IMR-90 (cell line): ENCODE measurements at regions of chr12 and their contacts with region 1.

Region 1: DNA sequence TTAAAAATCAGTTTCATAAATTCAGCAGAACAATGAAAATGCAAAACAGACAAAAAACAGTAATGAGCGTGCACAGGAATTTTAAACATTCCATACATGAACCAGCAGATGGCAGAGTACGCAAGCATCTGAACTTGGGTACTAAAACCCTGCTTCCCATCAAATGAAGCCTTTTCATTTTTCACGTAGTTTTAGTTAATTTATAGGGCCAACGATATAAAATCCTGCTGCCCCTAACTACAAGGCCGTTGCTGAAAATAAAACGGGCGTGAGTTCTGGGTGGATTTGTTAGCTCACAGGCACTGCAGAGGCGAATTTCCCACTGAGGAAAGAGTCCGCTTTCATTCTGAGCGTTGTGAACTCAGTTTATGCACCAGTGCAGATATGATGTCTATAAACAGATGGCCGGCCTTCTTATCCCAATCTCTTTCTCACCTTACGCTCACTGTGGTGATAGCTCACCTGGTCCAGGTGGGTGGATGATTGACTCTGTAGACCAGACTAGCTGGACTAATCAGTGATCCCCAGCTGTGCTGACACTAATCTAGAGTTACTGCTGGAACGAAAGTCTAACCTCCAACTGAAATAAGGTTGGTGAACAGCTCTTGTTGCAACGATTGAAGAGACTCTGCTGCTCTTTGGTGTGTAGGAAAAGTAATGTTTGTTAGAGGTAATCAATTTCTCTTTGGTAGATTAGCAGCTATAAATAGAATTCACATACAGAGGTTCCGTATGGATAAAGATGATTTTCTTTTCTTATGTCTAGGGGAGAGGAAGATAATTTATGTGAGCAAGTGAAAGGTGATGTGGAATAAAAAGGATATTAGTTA is 89.2 kb downstream of the PDZRN4 start:
- DNase-seq: peak; percentile 52
- ATAC-seq: peak; percentile 62
- H3K4me3 ChIP-seq: no peak overlapping the region
- H3K27ac ChIP-seq: no peak overlapping the region
- H3K4me1 ChIP-seq: no peaks in the 10 kb centered on the region
- H3K27me3 ChIP-seq: no peaks in the 10 kb centered on the region
- CTCF ChIP-seq: peak; percentile 73
- POLR2A ChIP-seq: no peak
- RAD21 ChIP-seq: peak; percentile 77

Region 2: DNA sequence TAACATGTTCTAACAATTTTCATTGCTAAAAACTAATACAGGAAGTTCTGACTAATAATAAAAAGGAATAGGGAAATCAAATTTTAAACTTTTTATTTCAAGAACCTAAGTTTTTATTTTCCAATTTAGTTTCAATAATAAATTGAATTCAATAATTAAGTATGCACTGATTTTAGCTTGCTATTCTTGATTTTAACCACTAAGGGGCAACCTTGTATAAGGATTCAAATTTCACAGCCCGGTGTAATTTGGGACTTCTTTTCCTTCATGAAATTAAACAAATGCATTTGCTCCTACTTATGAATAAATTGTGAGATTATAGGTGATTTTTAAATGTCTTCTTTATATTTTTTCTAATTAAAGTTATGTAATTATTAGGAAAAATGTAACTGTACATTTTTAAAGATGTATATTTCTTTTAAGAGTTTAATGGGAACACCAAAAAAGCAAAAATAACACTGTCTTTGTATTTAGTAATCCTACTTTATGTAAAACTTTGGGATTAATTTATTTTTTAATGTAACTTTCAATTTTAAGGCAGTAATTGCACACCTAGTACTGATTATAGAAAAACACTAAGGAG is 330.6 kb before region 1 on chr12:
- CTCF ChIA-PET with region 1: no interaction called
- POLR2A ChIA-PET with region 1: no interaction called
- dilution Hi-C with region 1: no loop called
- in situ Hi-C with region 1: loop called (anchors 10 kb)
- intact Hi-C with region 1: loop called (anchors 2 kb)
- DNase-seq: peak; percentile 42
- ATAC-seq: peak; percentile 57; the same call in 1 of the 2 replicates
- H3K4me3 ChIP-seq: no peak overlapping the region
- H3K27ac ChIP-seq: no peak overlapping the region
- H3K4me1 ChIP-seq: no peaks in the 10 kb centered on the region
- H3K27me3 ChIP-seq: no peaks in the 10 kb centered on the region
- CTCF ChIP-seq: peak; percentile 69
- POLR2A ChIP-seq: no peak
- RAD21 ChIP-seq: peak; percentile 73

Region 3: DNA sequence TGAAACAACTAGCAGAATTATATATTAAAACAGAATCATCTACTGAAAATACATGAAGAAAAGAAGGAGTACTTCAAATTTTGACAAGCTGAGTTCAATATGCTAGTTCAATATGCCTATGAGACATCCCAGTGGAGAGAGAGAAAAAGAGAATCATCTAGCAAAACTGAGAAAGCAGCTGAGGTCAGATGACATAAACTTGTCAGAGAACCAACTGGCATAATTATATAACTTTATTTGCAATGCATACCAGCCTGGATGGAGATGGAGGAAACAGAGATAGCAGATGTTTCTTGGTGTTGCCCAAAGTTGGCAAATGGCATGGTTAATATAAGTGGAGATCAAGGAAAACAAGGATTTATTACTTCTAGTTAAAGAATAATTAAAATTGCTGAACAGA is 237.9 kb before region 1 on chr12:
- CTCF ChIA-PET with region 1: no interaction called
- POLR2A ChIA-PET with region 1: no interaction called
- dilution Hi-C with region 1: no loop called
- in situ Hi-C with region 1: no loop called
- intact Hi-C with region 1: no loop called
- DNase-seq: no peak
- ATAC-seq: no peak
- H3K4me3 ChIP-seq: no peak overlapping the region
- H3K27ac ChIP-seq: no peak overlapping the region
- H3K4me1 ChIP-seq: no peaks in the 10 kb centered on the region
- H3K27me3 ChIP-seq: no peaks in the 10 kb centered on the region
- CTCF ChIP-seq: no peak
- POLR2A ChIP-seq: no peak
- RAD21 ChIP-seq: no peak

Region 4: GRCh38 chr12:41174602-41175001 is 102.7 kb before region 1 on chr12:
- CTCF ChIA-PET with region 1: no interaction called
- POLR2A ChIA-PET with region 1: no interaction called
- dilution Hi-C with region 1: no loop called
- in situ Hi-C with region 1: no loop called
- intact Hi-C with region 1: no loop called
- DNase-seq: no peak
- ATAC-seq: no peak
- H3K4me3 ChIP-seq: no peak overlapping the region
- H3K27ac ChIP-seq: no peak overlapping the region
- H3K4me1 ChIP-seq: no peaks in the 10 kb centered on the region
- H3K27me3 ChIP-seq: no peaks in the 10 kb centered on the region
- CTCF ChIP-seq: no peak
- POLR2A ChIP-seq: no peak
- RAD21 ChIP-seq: no peak

Region 5: DNA sequence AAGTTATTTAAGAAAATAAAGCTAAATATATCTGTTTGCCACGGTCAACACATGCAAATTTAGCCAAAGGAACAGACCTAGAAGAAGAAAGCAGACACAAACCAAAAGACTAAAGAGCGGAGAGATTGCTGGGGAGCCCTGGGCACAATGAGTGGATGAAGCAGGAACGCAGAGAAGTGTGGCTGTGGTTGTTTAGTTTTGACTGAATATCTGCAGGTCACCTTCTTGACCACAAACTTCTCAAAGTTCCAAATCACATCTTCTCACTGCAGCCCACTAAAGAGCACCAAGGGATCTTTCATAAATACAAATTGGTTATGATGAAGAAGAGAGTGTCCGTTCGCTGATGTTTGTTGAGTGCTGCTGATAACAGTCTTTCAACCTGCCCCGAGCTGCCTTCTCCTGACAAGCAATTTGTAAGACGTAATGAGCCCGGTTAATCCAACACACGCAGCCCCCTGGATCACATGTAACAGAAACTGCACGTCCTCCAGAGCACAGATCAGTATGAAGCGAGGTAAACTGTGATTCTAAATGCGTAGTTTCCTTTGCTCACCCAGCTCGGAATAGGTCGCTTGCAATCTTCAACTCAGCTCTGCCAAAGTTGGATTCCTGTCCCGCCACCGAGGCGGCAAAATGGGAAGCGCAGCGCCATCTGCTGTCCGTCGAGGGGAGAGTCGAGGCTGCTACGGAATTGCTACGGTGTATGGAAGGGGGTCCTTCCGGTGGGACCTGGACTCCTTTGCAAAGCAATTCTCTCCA is 746.6 kb after region 1 on chr12:
- CTCF ChIA-PET with region 1: interaction called, 20 read pairs
- POLR2A ChIA-PET with region 1: no interaction called
- dilution Hi-C with region 1: no loop called
- in situ Hi-C with region 1: loop called (anchors 10 kb)
- intact Hi-C with region 1: loop called (anchors 1 kb)
- DNase-seq: peak; percentile 64
- ATAC-seq: peak; percentile 99
- H3K4me3 ChIP-seq: peak overlapping the region; percentile 49
- H3K27ac ChIP-seq: no peak overlapping the region
- H3K4me1 ChIP-seq: no peaks in the 10 kb centered on the region
- H3K27me3 ChIP-seq: peaks cover 2% of the 10 kb centered on the region; the same call in 1 of the 2 replicates
- CTCF ChIP-seq: peak; percentile 87
- POLR2A ChIP-seq: no peak
- RAD21 ChIP-seq: peak; percentile 76

Region 6: GRCh38 chr12:42332301-42333285 is 1055.3 kb after region 1 on chr12:
- CTCF ChIA-PET with region 1: no interaction called
- POLR2A ChIA-PET with region 1: no interaction called
- dilution Hi-C with region 1: no loop called
- in situ Hi-C with region 1: no loop called
- intact Hi-C with region 1: loop called (anchors 10 kb)
- DNase-seq: peak; percentile 51
- ATAC-seq: peak; percentile 85
- H3K4me3 ChIP-seq: no peak overlapping the region
- H3K27ac ChIP-seq: no peak overlapping the region
- H3K4me1 ChIP-seq: 0 out of 2 replicates have a peak, but pooled peaks cover 1% of the 10 kb centered on the region
- H3K27me3 ChIP-seq: no peaks in the 10 kb centered on the region
- CTCF ChIP-seq: peak; percentile 63
- POLR2A ChIP-seq: no peak
- RAD21 ChIP-seq: peak; percentile 66

Region 7: GRCh38 chr12:42568952-42569915 is 1291.9 kb after region 1 on chr12:
- CTCF ChIA-PET with region 1: no interaction called
- POLR2A ChIA-PET with region 1: no interaction called
- dilution Hi-C with region 1: no loop called
- in situ Hi-C with region 1: no loop called
- intact Hi-C with region 1: loop called (anchors 5 kb)
- DNase-seq: peak; percentile 80
- ATAC-seq: peak; percentile 25; the same call in 1 of the 2 replicates
- H3K4me3 ChIP-seq: no peak overlapping the region
- H3K27ac ChIP-seq: no peak overlapping the region
- H3K4me1 ChIP-seq: peaks cover 20% of the 10 kb centered on the region
- H3K27me3 ChIP-seq: no peaks in the 10 kb centered on the region
- CTCF ChIP-seq: peak; percentile 69
- POLR2A ChIP-seq: no peak
- RAD21 ChIP-seq: peak; percentile 60